Astrocyte of the cerebellum (primary cell): ENCODE measurements at regions of chr5 and their contacts with region 1.

Region 1: GRCh38 chr5:91038180-91038808 is 344.8 kb downstream of the ARRDC3 start:
- DNase-seq: no peak
- H3K4me3 ChIP-seq: no peak overlapping the region
- CTCF ChIP-seq: no peak

Region 2: GRCh38 chr5:90994796-90995195 is 43.5 kb before region 1 on chr5:
- in situ Hi-C with region 1: loop called (anchors 5 kb)
- DNase-seq: no peak
- H3K4me3 ChIP-seq: no peak overlapping the region
- CTCF ChIP-seq: no peak

Region 3: GRCh38 chr5:92364986-92365550 is 1326.8 kb after region 1 on chr5:
- in situ Hi-C with region 1: no loop called
- DNase-seq: peak; percentile 97
- H3K4me3 ChIP-seq: no peak overlapping the region
- CTCF ChIP-seq: no peak